ENCODE measurements at regions of chr3 and their contacts with region 1.

Region 1: GRCh38 chr3:39189959-39190269 is 2.5 kb downstream of the XIRP1 start:
- DNase-seq: peak; percentile 80
- H3K4me3 Mint-ChIP-seq: no peak overlapping the region
- H3K27ac Mint-ChIP-seq: no peak overlapping the region
- H3K4me1 Mint-ChIP-seq: peaks cover 7% of the 10 kb centered on the region
- H3K27me3 Mint-ChIP-seq: no peaks in the 10 kb centered on the region
- CTCF ChIP-seq: peak; percentile 69

Region 2: GRCh38 chr3:39107388-39108199 is 82.3 kb before region 1 on chr3 and contains the starts of genes GORASP1 and TTC21A:
- CTCF ChIA-PET with region 1: interaction called, 11 read pairs
- POLR2A ChIA-PET with region 1: no interaction called
- intact Hi-C with region 1: no loop called
- DNase-seq: peak; percentile 84
- H3K4me3 Mint-ChIP-seq: peak within 1 kb of the TSS; percentile 94
- H3K27ac Mint-ChIP-seq: peak within 1 kb of the TSS; percentile 94
- H3K4me1 Mint-ChIP-seq: peaks cover 37% of the 10 kb centered on the region
- H3K27me3 Mint-ChIP-seq: no peaks in the 10 kb centered on the region
- CTCF ChIP-seq: no peak
- total RNA-seq, gene GORASP1: 34.4 and 40.7 TPM in 2 replicates
- total RNA-seq, gene TTC21A: 2.1 and 5.4 TPM in 2 replicates

Region 3: DNA sequence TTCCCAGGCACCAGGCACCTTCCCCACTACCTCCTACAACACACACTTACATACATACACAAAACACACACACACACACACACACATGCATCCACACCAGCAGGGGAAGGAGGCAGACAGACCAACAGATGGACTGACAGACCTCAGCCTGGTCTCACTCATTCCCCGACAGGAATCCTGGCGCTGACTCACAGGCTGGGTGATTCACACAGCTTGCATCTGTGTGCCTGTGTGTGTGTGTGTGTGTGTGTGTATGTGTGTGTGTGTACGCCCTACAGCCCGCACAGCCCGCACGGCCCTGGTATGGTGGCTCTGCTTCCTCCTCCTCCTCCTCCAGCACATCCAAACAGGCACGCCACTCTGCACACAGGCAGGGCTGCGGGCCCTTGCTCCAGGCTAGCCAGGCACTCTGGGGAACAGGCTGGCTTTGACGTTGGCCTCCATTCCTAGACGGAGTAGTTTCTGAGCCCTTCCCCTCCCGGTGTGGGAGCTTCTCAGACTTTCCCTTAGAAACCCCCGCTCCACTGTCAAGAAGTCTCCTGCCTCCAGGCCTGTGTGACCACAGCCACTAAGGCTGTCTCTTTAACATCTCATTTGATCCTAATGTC is 42.8 kb before region 1 on chr3:
- CTCF ChIA-PET with region 1: interaction called, 12 read pairs
- POLR2A ChIA-PET with region 1: no interaction called
- intact Hi-C with region 1: no loop called
- DNase-seq: peak; percentile 97
- H3K4me3 Mint-ChIP-seq: peak overlapping the region; percentile 37
- H3K27ac Mint-ChIP-seq: peak overlapping the region; percentile 66
- H3K4me1 Mint-ChIP-seq: peaks cover 62% of the 10 kb centered on the region
- H3K27me3 Mint-ChIP-seq: no peaks in the 10 kb centered on the region
- CTCF ChIP-seq: no peak

Region 4: DNA sequence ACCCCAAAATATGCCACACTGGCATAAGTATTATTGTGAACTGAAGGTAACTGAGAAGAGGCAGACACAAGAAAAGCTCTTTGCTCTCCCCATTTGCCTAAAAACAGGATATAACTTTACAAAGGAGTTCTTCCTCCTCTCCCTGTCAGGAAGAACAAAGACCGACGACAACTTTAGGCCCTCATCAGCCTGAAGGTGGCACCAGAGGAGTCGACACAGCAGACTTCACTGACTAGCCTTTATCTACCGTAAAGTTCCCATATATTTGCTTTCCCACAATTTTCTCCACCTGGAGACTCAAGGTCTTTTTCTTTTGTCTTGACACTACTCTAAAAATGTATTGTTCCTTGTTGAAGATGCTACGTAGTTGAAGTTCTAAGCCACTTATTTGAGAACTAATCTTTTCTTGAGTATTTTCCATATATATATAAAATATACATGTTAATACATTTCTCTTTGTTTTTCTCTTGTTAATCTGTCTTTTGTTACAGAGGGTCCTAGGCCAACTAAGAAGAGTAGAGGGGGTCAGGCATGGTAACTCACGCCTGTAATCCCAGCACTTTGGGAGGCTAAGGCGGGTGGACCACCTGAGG is 18.6 kb after region 1 on chr3:
- CTCF ChIA-PET with region 1: interaction called, 51 read pairs
- POLR2A ChIA-PET with region 1: no interaction called
- intact Hi-C with region 1: no loop called
- DNase-seq: peak; percentile 67
- H3K4me3 Mint-ChIP-seq: no peak overlapping the region
- H3K27ac Mint-ChIP-seq: no peak overlapping the region
- H3K4me1 Mint-ChIP-seq: no peaks in the 10 kb centered on the region
- H3K27me3 Mint-ChIP-seq: peaks cover 38% of the 10 kb centered on the region
- CTCF ChIP-seq: peak; percentile 39

Region 5: GRCh38 chr3:39260957-39261356 is 71.0 kb after region 1 on chr3:
- CTCF ChIA-PET with region 1: interaction called, 45 read pairs
- POLR2A ChIA-PET with region 1: no interaction called
- intact Hi-C with region 1: loop called (anchors 1 kb)
- DNase-seq: peak; percentile 92
- H3K4me3 Mint-ChIP-seq: no peak overlapping the region
- H3K27ac Mint-ChIP-seq: peak overlapping the region; percentile 89
- H3K4me1 Mint-ChIP-seq: no peaks in the 10 kb centered on the region
- H3K27me3 Mint-ChIP-seq: peaks cover 48% of the 10 kb centered on the region
- CTCF ChIP-seq: peak; percentile 27

Region 6: DNA sequence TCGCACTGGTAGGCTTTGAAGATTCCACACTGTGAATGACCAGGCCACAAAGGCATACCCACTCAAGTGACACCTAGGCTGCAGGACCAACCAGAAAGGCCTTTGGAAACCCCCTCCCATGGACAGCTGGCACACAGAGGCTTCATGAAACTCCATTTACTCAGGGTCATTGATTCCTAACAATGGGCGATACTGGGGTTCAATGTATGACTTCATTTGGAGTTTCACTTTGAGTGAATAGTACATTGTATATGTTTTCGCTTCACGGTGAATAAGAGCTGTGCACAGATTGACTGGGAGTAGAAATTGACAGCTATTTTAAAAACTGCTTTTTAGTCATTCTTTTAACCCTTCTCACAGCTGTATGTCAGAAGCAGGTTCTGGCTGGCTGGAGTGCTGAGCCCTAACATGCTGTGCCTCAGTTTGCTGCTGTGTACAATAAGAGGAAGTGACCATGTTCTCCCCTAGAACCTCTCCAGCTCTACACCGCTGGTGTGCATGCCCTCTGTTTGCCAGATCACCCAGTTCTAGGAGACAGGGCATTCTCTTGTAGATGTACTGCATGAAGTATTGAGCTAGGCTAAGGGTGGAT is 105.4 kb after region 1 on chr3:
- CTCF ChIA-PET with region 1: interaction called, 477 read pairs
- POLR2A ChIA-PET with region 1: no interaction called
- intact Hi-C with region 1: no loop called
- DNase-seq: no peak
- H3K4me3 Mint-ChIP-seq: no peak overlapping the region
- H3K27ac Mint-ChIP-seq: no peak overlapping the region
- H3K4me1 Mint-ChIP-seq: no peaks in the 10 kb centered on the region
- H3K27me3 Mint-ChIP-seq: peaks cover 15% of the 10 kb centered on the region
- CTCF ChIP-seq: no peak

Region 7: GRCh38 chr3:39896184-39896583 is 706.3 kb after region 1 on chr3:
- CTCF ChIA-PET with region 1: no interaction called
- POLR2A ChIA-PET with region 1: no interaction called
- intact Hi-C with region 1: no loop called
- DNase-seq: no peak
- H3K4me3 Mint-ChIP-seq: no peak overlapping the region
- H3K27ac Mint-ChIP-seq: no peak overlapping the region
- H3K4me1 Mint-ChIP-seq: no peaks in the 10 kb centered on the region
- H3K27me3 Mint-ChIP-seq: no peaks in the 10 kb centered on the region
- CTCF ChIP-seq: no peak

Measured in MCF 10A (cell line).